ENCODE measurements at regions of chr1 and their contacts with region 1.

Region 1: GRCh38 chr1:119662034-119662437 is 14.0 kb upstream of the ZNF697 start:
- DNase-seq: no peak
- ATAC-seq: no peak
- H3K4me3 Mint-ChIP-seq: no peak overlapping the region
- H3K27ac Mint-ChIP-seq: no peak overlapping the region
- H3K4me1 Mint-ChIP-seq: peaks cover 11% of the 10 kb centered on the region
- H3K27me3 Mint-ChIP-seq: peaks cover 29% of the 10 kb centered on the region

Region 2: DNA sequence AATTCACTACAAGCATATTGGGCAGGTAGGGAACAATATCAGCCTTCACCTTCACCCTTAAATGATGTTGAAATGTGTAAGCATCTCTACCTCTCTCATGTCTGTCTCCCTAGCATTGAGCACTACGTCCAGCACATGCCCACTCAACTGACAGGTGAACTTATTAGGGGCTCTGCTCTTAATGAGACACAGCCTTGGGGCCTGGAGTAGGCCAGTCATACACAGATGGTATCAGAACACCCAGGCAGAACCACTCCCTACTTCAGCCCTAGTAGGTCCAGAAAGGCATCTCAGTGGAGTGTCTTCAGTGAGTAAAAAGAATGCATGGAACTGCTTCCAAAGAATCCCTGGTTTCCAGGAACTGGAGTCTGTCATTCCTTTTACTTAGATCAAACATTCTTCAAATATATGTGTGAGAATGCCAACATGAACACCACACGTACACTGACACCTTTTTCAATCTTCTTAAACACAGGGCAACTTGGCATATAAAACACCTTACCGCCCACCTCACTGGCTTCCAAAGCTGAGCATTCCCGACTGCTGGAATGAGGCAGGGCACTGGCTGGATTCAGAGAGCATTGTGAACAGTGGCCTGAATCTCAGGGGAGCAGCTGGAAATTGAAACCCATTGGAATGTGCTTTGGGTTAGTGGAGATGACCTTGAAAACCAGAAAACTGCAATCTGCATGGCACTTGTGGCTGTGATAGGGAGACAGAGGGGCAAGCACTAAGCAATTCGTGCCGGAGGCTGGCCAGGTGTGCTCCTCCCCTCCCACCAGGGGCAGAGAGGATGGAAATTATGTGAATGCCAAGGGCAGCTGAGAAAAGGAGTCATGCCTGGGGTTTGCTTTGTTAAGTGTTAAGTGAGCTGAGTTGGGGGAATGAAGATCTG is 179.3 kb before region 1 on chr1:
- CTCF ChIA-PET with region 1: no interaction called
- DNase-seq: no peak
- ATAC-seq: no peak
- H3K4me3 Mint-ChIP-seq: no peak overlapping the region
- H3K27ac Mint-ChIP-seq: no peak overlapping the region
- H3K4me1 Mint-ChIP-seq: no peaks in the 10 kb centered on the region
- H3K27me3 Mint-ChIP-seq: peaks cover 6% of the 10 kb centered on the region

Region 3: GRCh38 chr1:119675349-119676345 is 13.6 kb after region 1 on chr1:
- CTCF ChIA-PET with region 1: interaction called, 20 read pairs
- DNase-seq: peak; percentile 77
- ATAC-seq: no peak
- H3K4me3 Mint-ChIP-seq: peak overlapping the region; percentile 27
- H3K27ac Mint-ChIP-seq: no peak overlapping the region
- H3K4me1 Mint-ChIP-seq: peaks cover 6% of the 10 kb centered on the region
- H3K27me3 Mint-ChIP-seq: peaks cover 37% of the 10 kb centered on the region

Region 4: GRCh38 chr1:119732465-119733168 is 70.6 kb after region 1 on chr1:
- CTCF ChIA-PET with region 1: no interaction called
- DNase-seq: no peak
- ATAC-seq: no peak
- H3K4me3 Mint-ChIP-seq: no peak overlapping the region
- H3K27ac Mint-ChIP-seq: no peak overlapping the region
- H3K4me1 Mint-ChIP-seq: peaks cover 3% of the 10 kb centered on the region
- H3K27me3 Mint-ChIP-seq: no peaks in the 10 kb centered on the region

Measured in activated CD8-positive, alpha-beta memory T cell treated with anti-CD3 and anti-CD28 coated beads, Interleukin-2, amount 10 ng/mL, durations not matched to agents 7 days and 5 days (primary cell).